ENCODE measurements at regions of chr9 and their contacts with region 1.

Region 1: GRCh38 chr9:129737479-129738274 is 15.2 kb downstream of the PTGES start:
- DNase-seq: peak; percentile 79 to 91
- H3K4me3 ChIP-seq: peak overlapping the region; percentile 50 to 59
- H3K27ac ChIP-seq: peak overlapping the region; percentile 60 to 69
- H3K4me1 ChIP-seq: peaks cover 0 to 11% (median 2%) of the 10 kb centered on the region in 4 donors
- H3K27me3 ChIP-seq: peaks cover 0 to 4% of the 10 kb centered on the region in 2 donors
- CTCF ChIP-seq: peak; percentile 92 to 97

Region 2: DNA sequence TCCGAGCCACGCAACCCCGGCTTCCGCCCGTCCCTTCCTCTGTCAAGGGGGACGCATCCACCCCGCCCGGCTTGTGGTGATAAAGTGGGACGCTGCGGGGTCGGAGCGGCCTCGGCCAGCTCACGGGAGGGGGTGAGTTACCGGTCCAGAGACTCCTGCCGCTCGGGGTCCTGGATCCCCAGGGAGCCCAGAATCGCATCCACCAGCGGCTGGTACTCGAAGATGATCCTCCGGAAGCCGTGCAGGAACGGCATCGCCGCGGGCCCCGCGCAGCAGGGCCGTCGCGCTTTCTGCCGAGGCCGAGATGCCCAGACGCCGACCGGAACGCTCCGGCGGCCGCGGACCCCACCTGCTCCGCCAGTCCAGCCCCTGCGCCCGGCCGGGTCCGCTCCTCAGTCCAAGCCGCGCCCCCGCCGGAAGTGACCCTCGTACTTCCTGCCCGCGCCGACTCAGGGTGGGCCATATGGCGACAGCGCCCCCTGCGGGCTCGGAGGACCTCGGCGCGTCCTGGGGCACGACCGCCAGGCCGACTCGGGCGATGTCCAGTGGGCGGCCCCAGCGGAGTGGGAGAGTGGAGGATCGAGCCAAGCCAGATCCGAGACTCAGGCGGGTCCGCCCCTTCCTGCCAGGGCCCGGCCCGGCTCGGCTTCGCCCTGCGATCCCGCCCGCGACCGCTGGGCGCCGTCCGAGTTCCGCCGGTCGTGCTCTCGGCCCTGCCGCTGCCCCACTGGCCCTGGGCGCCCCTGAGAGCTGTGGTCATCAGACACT is 95.7 kb before region 1 on chr9 and contains the start of gene ASB6:
- intact Hi-C with region 1: loop called (anchors 5 kb)
- DNase-seq: peak; percentile 96 to 99
- H3K4me3 ChIP-seq: peak within 1 kb of the TSS; percentile 92
- H3K27ac ChIP-seq: peak within 1 kb of the TSS; percentile 79 to 93
- H3K4me1 ChIP-seq: peaks cover 0 to 33% (median 27%) of the 10 kb centered on the region in 4 donors
- H3K27me3 ChIP-seq: no peaks in the 10 kb centered on the region
- CTCF ChIP-seq: peak; percentile 100

Measured in tibial artery (tissue), 4 donors.